Sciatic nerve (tissue), 2 donors: ENCODE measurements at regions of chr3 and their contacts with region 1.

Region 1: DNA sequence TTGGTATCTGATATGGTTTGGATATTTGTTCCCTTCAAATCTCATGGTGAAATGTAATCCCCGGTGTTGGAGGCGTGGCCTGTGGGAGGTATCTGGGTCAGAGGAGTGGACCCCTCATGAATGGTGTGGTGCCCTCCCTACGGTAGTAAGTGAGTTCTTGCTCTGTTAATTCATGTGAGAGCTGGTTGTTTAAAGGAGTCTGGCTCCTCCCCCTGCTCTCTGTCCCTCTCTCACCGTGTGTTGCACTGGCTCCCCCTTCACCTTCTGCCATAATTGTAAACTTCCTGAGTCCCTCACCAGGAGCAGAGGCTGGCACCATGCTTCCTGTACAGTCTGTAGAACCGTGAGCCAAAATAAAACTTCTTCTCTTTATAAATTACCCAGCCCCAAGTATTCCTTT is 246.9 kb upstream of the AGTR1 start:
- DNase-seq: no peak
- ATAC-seq: no peak

Region 2: DNA sequence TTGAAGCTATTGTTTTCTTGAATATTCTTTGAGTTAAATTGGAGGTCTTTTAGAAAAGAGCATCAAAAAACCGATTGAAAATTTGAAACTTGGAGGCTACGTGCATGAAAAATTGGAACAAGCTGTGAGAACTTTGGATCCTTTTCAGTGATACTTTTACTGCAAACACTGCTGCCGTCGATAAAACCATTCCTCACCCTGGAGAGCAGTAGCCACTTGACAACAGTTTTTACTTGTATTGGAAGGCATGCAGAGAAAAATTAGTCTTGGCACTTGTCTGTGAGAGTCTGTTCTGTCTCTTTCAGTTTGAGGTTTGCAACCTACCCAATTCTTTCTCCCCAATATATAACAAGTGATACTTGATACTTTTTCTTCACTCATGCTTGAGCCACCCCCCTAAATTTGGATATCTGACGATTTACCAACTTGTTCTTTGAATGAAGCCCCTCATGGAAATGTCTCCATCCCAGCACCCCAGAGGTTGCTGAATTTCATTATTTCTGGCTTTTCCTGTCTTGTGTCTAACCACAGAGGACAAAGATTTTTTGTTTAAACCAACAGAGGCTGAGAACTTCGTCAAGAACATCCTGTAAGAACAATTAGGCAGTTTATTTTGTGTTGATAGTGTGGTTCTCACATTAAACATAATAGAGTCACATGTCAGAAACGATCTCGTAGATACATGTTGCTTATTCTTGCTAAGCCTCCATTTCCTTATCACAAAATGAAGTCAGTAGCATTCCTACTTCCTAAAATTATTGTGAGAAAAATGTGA is 1538.4 kb before region 1 on chr3:
- intact Hi-C with region 1: loop called (anchors 5 kb)
- DNase-seq: no peak
- ATAC-seq: peak; percentile 67

Region 3: GRCh38 chr3:148333091-148333490 is 117.7 kb before region 1 on chr3:
- intact Hi-C with region 1: no loop called
- DNase-seq: no peak
- ATAC-seq: no peak

Region 4: GRCh38 chr3:148400754-148401153 is 50.1 kb before region 1 on chr3:
- intact Hi-C with region 1: no loop called
- DNase-seq: no peak
- ATAC-seq: no peak